ENCODE measurements at regions of chr14 and their contacts with region 1.

Region 1: GRCh38 chr14:52776816-52777215 is 14.6 kb downstream of the GNPNAT1 start:
- DNase-seq: peak in 3 of 9 donors; percentile 35 to 39 (median 36)
- ATAC-seq: no peak
- H3K4me3 ChIP-seq: no peak overlapping the region
- H3K4me3 Mint-ChIP-seq: no peak overlapping the region
- H3K27ac ChIP-seq: no peak overlapping the region
- H3K27ac Mint-ChIP-seq: peak overlapping the region in 4 of 9 donors; percentile 13 to 59 (median 30)
- H3K4me1 ChIP-seq: no peaks in the 10 kb centered on the region
- H3K4me1 Mint-ChIP-seq: peaks cover 0 to 11% (median 0%) of the 10 kb centered on the region in 7 donors
- H3K27me3 ChIP-seq: no peaks in the 10 kb centered on the region
- H3K27me3 Mint-ChIP-seq: no peaks in the 10 kb centered on the region

Region 2: DNA sequence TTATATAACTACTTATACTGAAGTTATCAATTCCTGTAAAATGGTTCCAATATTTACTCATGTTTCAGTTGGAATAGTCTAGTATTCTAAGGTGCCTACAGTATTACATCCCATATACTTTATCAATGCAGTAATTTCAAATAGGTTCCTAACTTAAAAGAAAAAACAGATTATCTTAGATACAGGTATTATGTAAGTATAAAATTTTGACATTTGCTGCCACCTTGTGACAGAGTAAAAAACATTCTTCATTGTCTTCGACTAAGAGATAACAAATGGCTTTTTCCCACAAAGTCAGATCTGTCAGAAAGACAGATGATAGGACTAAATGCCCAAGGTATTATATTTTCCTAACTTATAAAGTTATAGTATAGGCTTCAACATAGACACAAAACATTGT is 303.3 kb before region 1 on chr14:
- CTCF ChIA-PET with region 1: no interaction called
- POLR2A ChIA-PET with region 1: no interaction called
- intact Hi-C with region 1: loop called in 1 of 2 experiments (anchors 2 kb)
- DNase-seq: peak in 7 of 9 donors; percentile 16 to 60 (median 42)
- ATAC-seq: peak; percentile 42
- H3K4me3 ChIP-seq: no peak overlapping the region
- H3K4me3 Mint-ChIP-seq: no peak overlapping the region
- H3K27ac ChIP-seq: no peak overlapping the region
- H3K27ac Mint-ChIP-seq: no peak overlapping the region
- H3K4me1 ChIP-seq: no peaks in the 10 kb centered on the region
- H3K4me1 Mint-ChIP-seq: peaks cover 4 to 40% (median 24%) of the 10 kb centered on the region in 7 donors
- H3K27me3 ChIP-seq: no peaks in the 10 kb centered on the region
- H3K27me3 Mint-ChIP-seq: no peaks in the 10 kb centered on the region

Region 3: DNA sequence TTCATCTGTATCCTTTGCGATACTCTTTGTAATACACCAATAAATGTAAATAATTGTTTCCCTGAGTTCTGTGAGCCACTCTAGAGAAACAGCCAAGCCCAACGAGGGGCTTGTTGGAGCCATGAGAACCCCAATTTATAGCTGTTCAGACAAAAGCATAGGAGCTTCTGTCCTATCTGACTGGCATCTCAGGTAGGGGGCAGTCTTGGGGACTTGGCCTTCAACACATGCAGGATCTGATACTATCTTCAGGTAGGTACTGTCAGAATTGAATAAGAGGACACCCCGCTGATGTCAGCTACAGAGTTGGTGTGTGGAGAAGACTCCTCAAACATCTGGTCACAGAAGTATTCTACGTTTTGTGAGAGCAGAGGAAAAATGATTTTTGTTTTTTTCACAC is 249.8 kb before region 1 on chr14:
- CTCF ChIA-PET with region 1: no interaction called
- POLR2A ChIA-PET with region 1: no interaction called
- intact Hi-C with region 1: loop called in 1 of 2 experiments (anchors 5 kb)
- DNase-seq: no peak
- ATAC-seq: no peak
- H3K4me3 ChIP-seq: no peak overlapping the region
- H3K4me3 Mint-ChIP-seq: no peak overlapping the region
- H3K27ac ChIP-seq: no peak overlapping the region
- H3K27ac Mint-ChIP-seq: no peak overlapping the region
- H3K4me1 ChIP-seq: no peaks in the 10 kb centered on the region
- H3K4me1 Mint-ChIP-seq: peaks cover 0 to 2% (median 0%) of the 10 kb centered on the region in 7 donors
- H3K27me3 ChIP-seq: no peaks in the 10 kb centered on the region
- H3K27me3 Mint-ChIP-seq: no peaks in the 10 kb centered on the region

Region 4: DNA sequence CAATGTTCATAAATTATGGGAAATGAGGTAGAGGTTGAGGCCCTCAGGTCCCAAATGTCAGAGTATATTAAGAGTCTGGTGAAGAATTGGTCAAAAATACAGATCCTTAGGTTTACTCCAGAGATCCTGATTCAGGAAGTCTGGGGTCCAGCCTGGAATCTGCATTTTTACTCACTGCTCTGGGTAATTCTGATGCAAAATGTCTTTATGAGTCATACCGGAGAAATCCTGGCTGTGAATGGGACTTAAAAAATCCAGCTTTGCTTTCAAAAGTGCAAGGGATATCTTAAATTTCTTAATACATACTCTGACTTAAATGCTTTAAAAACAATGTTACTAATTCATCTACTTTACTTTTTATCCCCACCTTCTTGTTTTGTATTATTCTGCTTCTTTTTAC is 99.5 kb after region 1 on chr14:
- CTCF ChIA-PET with region 1: no interaction called
- POLR2A ChIA-PET with region 1: no interaction called
- intact Hi-C with region 1: no loop called
- DNase-seq: no peak
- ATAC-seq: no peak
- H3K4me3 ChIP-seq: no peak overlapping the region
- H3K4me3 Mint-ChIP-seq: no peak overlapping the region
- H3K27ac ChIP-seq: no peak overlapping the region
- H3K27ac Mint-ChIP-seq: no peak overlapping the region
- H3K4me1 ChIP-seq: no peaks in the 10 kb centered on the region
- H3K4me1 Mint-ChIP-seq: no peaks in the 10 kb centered on the region
- H3K27me3 ChIP-seq: no peaks in the 10 kb centered on the region
- H3K27me3 Mint-ChIP-seq: peaks cover 0 to 6% (median 0%) of the 10 kb centered on the region in 5 donors

Region 5: DNA sequence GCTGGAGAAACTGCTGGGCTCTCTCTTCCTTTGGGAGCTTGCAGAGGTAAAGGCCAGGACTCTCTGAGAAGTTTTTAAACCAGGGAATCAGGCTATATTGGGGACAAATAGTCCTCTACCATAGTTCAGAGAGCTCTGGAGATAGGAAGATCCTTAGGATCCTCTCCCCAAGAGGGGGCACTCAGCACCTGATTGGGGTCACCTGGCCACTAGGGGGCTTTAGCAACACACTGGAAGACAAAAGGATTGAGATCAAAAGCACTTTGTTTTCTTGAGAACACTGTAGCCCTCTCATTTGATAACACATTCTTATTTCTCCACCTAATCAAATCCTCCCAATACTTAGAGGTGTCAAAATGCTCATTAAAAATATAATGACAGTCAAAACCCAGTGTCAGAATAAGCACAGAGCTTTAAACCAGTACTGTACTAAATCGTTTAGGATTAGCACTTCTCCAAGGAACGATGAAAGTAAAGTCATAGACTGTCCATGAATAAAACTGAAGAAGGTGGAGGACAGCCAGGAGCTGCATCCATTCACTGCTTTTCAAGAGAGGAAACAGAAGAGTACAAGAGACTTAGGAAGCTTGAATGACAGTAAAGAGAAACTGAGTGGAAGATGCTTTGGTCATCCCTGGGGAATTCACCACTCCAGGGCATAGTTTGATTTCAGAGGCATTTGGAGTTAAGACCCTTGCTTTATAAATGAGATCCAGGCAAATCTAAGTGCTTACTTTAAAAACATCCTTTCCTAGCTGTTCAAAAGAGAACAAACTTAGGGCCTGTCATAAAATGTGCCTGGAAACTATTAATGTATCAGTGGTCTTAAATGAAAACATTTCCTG is 1153.3 kb after region 1 on chr14:
- CTCF ChIA-PET with region 1: no interaction called
- POLR2A ChIA-PET with region 1: no interaction called
- intact Hi-C with region 1: no loop called
- DNase-seq: peak in 3 of 9 donors; percentile 14 to 47 (median 29)
- ATAC-seq: no peak
- H3K4me3 ChIP-seq: no peak overlapping the region
- H3K4me3 Mint-ChIP-seq: no peak overlapping the region
- H3K27ac ChIP-seq: no peak overlapping the region
- H3K27ac Mint-ChIP-seq: no peak overlapping the region
- H3K4me1 ChIP-seq: no peaks in the 10 kb centered on the region
- H3K4me1 Mint-ChIP-seq: no peaks in the 10 kb centered on the region
- H3K27me3 ChIP-seq: no peaks in the 10 kb centered on the region
- H3K27me3 Mint-ChIP-seq: peaks cover 8 to 26% (median 11%) of the 10 kb centered on the region in 5 donors